Sigmoid colon (tissue), 7 donors: ENCODE measurements at regions of chr1 and their contacts with region 1.

Region 1: GRCh38 chr1:18575620-18576019 is 55.0 kb upstream of the PAX7 start:
- DNase-seq: peak; percentile 69
- H3K4me3 ChIP-seq: no peak overlapping the region
- H3K27ac ChIP-seq: no peak overlapping the region
- H3K4me1 ChIP-seq: no peaks in the 10 kb centered on the region
- H3K27me3 ChIP-seq: peaks cover 0 to 16% (median 6%) of the 10 kb centered on the region in 3 donors
- CTCF ChIP-seq: peak; percentile 26 to 49 (median 44)
- EP300 ChIP-seq: no peak
- POLR2A ChIP-seq: no peak

Region 2: GRCh38 chr1:17653728-17654351 is 921.8 kb before region 1 on chr1:
- intact Hi-C with region 1: loop called (anchors 10 kb)
- DNase-seq: no peak
- H3K4me3 ChIP-seq: no peak overlapping the region
- H3K27ac ChIP-seq: peak overlapping the region in 1 of 4 donors; percentile 2
- H3K4me1 ChIP-seq: peaks cover 0 to 2% (median under 1%) of the 10 kb centered on the region in 4 donors
- H3K27me3 ChIP-seq: no peaks in the 10 kb centered on the region
- CTCF ChIP-seq: peak in 3 of 4 experiments; percentile 11 to 50 (median 44)
- EP300 ChIP-seq: no peak
- POLR2A ChIP-seq: no peak